Heart right ventricle (tissue), 16 donors: ENCODE measurements at regions of chr17 and their contacts with region 1.

Region 1: GRCh38 chr17:12631076-12631475 is 34.6 kb upstream of the MYOCD start:
- DNase-seq: peak in 1 of 2 donors; percentile 5
- ATAC-seq: no peak
- H3K4me3 ChIP-seq: no peak overlapping the region
- H3K27ac ChIP-seq: peak overlapping the region in 7 of 10 donors; percentile 12 to 66 (median 57)
- H3K4me1 ChIP-seq: peaks cover 0 to 14% (median 0%) of the 10 kb centered on the region in 9 donors
- H3K27me3 ChIP-seq: no peaks in the 10 kb centered on the region
- CTCF ChIP-seq: no peak

Region 2: DNA sequence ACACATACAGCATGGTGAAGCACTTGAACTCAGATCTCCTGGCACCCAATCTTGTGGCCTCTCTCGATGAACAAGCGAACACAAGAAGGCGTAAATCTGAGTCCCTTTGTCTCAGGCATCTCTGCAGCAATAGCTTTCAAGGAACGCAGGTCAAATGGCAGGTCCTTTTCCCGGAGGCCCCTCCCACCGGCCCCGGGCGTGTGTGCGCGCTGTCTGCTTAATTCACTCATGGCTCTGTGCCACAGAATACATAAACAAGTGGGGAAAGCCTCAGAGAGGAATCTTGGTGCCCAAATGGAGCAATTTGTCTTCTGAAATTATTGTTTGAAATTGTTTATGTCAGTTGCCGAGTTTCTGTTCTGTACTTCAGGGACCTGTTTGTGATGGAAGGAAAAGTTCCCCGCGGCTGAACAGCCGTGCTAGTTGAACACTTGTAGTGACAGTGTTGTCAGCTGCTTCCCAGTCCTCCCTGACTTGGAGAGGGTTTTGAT is 49.4 kb after region 1 on chr17:
- intact Hi-C with region 1: loop called in 1 of 10 experiments (anchors 5 kb)
- DNase-seq: peak in 1 of 2 donors; percentile 25
- ATAC-seq: peak in 3 of 8 donors; percentile 40 to 68 (median 48)
- H3K4me3 ChIP-seq: peak overlapping the region in 3 of 10 donors; percentile 3 to 16 (median 13)
- H3K27ac ChIP-seq: peak overlapping the region; percentile 3 to 75 (median 62)
- H3K4me1 ChIP-seq: peaks cover 0 to 81% (median 29%) of the 10 kb centered on the region in 9 donors
- H3K27me3 ChIP-seq: no peaks in the 10 kb centered on the region
- CTCF ChIP-seq: no peak